ENCODE measurements at regions of chr12 and their contacts with region 1.

Region 1: DNA sequence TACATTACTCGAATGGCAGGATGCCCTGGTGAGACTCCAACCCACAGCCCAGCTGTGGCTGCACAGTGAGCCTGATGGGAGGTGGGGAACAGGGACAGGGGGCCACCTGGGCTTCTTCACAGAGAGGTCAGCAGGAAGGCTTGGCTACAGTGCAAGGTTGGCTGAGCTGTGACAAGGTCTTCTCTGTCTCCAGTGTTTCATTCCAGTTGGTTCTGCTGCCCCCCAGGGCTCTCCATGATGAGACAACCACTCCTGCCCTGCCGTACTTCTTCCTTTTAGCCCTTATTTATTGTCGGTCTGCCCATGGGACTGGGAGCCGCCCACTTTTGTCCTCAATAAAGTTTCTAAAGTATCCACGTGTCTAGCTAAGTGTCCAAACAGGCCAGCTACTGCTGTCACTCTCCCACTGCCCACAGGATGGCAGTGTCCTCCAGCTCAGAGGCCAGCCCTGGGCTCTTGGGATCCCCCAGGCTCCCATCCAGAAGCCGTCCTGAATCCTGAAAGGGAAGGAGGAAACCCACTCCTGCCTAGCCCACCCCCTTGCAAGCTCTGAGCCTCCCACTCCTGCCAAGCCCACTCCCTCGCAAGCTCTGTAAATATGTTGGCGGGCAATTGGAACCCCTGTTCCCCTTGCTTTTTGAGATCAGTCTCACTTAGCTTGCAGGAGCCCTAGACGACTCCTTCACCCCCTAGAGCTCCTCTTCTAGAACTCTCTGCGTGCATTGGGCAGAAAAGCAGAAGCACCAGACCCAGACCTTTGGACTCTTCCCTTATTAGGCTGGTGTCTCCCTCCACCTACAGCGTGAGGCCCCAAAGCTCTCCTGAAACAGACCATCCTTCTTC is 5.4 kb downstream of the C1QL4 start:
- DNase-seq: no peak
- ATAC-seq: no peak
- H3K4me3 Mint-ChIP-seq: no peak overlapping the region
- H3K27ac Mint-ChIP-seq: no peak overlapping the region
- H3K4me1 Mint-ChIP-seq: peaks cover 4% of the 10 kb centered on the region
- H3K27me3 Mint-ChIP-seq: peaks cover 27% of the 10 kb centered on the region

Region 2: GRCh38 chr12:49277466-49277865 is 54.1 kb before region 1 on chr12:
- CTCF ChIA-PET with region 1: no interaction called
- POLR2A ChIA-PET with region 1: no interaction called
- DNase-seq: no peak
- ATAC-seq: no peak
- H3K4me3 Mint-ChIP-seq: no peak overlapping the region
- H3K27ac Mint-ChIP-seq: no peak overlapping the region
- H3K4me1 Mint-ChIP-seq: no peaks in the 10 kb centered on the region
- H3K27me3 Mint-ChIP-seq: peaks cover 5% of the 10 kb centered on the region

Region 3: DNA sequence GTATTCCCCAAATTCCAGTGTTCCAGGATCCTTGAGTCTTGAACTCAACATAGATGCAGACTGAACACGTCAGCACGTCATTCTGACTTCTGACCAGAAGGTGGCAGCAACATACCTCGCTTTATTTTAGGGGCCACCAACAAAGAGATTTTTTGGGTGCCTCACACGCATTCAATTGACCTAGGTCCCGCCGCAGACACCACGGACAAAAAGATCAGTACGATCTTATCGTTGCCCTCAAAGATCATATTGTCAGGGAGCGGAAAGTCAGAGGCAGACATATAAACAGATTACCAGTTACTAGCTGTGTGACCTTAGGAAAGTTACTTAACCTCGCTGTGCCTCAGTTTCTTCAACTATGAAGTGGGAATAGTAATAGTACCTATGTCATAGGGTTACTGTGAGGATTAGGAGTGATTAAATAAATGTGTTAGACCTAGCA is 43.2 kb before region 1 on chr12:
- CTCF ChIA-PET with region 1: interaction called, 31 read pairs
- POLR2A ChIA-PET with region 1: no interaction called
- DNase-seq: peak; percentile 82
- ATAC-seq: peak; percentile 59
- H3K4me3 Mint-ChIP-seq: no peak overlapping the region
- H3K27ac Mint-ChIP-seq: no peak overlapping the region
- H3K4me1 Mint-ChIP-seq: peaks cover 5% of the 10 kb centered on the region
- H3K27me3 Mint-ChIP-seq: peaks cover 18% of the 10 kb centered on the region

Region 4: DNA sequence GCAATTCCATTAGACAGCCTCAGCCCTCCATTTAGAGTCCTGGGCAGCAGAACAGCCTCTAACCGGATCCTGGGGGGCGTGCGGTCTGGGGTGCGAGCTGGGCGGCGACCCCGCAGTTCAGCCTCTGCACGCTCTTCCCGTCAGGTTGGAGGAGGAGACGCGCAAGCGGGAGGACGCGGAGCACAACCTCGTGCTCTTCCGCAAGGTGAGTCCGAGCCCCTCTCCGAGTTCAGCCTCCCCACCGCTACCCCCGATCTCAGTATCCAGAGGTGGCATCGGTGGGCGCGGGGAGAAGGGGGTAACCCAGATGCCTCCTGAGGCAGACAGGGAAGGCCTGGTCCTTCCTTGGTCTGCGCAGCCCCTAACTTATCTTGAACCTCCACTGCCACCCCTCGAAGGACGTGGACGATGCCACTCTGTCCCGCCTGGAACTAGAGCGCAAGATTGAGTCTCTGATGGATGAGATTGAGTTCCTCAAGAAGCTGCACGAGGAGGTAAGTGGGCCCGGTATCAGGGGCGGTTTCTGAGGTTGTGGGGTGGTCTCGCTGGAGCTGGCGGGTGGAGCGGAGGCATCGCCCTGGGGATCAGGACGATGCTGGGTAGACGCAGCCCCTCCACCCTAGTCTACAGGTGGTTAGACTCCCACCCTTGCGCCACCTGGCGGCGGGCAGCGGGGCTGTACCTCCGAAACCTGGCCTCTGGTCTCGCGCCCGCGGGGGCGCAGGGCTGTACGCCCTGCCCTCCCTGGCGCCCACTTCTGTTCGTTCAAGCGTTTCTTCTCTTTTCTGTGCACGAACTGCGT is 35.4 kb before region 1 on chr12:
- CTCF ChIA-PET with region 1: interaction called, 18 read pairs
- POLR2A ChIA-PET with region 1: no interaction called
- DNase-seq: peak; percentile 76
- ATAC-seq: peak; percentile 73
- H3K4me3 Mint-ChIP-seq: peak overlapping the region; percentile 63
- H3K27ac Mint-ChIP-seq: no peak overlapping the region
- H3K4me1 Mint-ChIP-seq: peaks cover 22% of the 10 kb centered on the region
- H3K27me3 Mint-ChIP-seq: peaks cover 51% of the 10 kb centered on the region

Region 5: GRCh38 chr12:49366652-49367380 is 35.2 kb after region 1 on chr12:
- CTCF ChIA-PET with region 1: interaction called, 12 read pairs
- POLR2A ChIA-PET with region 1: interaction called, 4 read pairs
- DNase-seq: peak; percentile 90
- ATAC-seq: peak; percentile 89
- H3K4me3 Mint-ChIP-seq: peak overlapping the region; percentile 97
- H3K27ac Mint-ChIP-seq: peak overlapping the region; percentile 98
- H3K4me1 Mint-ChIP-seq: peaks cover 38% of the 10 kb centered on the region
- H3K27me3 Mint-ChIP-seq: no peaks in the 10 kb centered on the region

Region 6: GRCh38 chr12:49403971-49404450 is 72.4 kb after region 1 on chr12:
- CTCF ChIA-PET with region 1: no interaction called
- POLR2A ChIA-PET with region 1: no interaction called
- DNase-seq: no peak
- ATAC-seq: peak; percentile 49
- H3K4me3 Mint-ChIP-seq: no peak overlapping the region
- H3K27ac Mint-ChIP-seq: no peak overlapping the region
- H3K4me1 Mint-ChIP-seq: peaks cover 11% of the 10 kb centered on the region
- H3K27me3 Mint-ChIP-seq: no peaks in the 10 kb centered on the region

Measured in activated CD8-positive, alpha-beta T cell treated with anti-CD3 and anti-CD28 coated beads, Interleukin-2, amount 10 ng/mL, durations not matched to agents 7 days and 5 days (primary cell).